ENCODE measurements at regions of chr19 and their contacts with region 1.

Region 1: DNA sequence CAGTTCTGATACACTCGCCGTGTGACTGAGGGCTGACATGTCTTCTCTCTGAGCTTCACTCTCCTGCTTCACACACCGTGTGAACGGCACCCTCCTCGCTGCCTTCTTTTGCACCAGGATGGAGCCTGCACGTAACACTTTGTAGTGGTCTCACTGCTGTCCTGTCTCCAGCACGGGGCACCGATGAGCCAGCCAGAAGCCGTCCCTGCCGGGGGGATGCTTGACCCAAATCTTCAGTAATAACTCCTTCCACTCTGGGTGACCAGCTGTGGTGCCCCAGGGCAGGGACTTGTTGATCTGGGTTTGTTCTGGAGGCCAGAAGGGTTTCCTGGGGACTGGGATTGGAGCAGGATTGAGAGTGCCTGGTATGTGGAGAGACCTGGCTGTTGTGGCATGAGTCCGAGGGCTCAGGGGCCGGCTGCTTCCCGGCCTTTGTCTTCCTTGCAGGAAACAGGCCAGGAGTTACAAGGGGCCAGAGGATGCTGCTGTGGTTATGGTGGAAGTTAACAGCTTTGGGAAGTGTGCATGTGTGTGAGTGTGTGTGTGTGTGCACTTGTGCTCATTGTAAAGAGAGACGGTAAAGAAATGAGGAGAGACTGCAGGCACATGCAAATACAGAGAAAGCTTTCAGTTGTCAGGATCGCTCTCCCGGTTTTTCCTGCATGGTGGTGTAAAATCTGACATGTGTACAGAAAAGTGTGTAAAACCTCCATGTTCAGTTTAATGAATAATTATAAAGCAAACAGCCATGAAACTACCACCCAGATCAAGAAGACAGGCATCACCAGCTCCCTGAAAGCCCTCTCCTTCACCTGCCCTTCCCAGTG is 18.9 kb downstream of the PAK4 start:
- DNase-seq: no peak
- ATAC-seq: peak; percentile 64
- H3K4me3 ChIP-seq: no peak overlapping the region
- H3K27ac ChIP-seq: peak overlapping the region; percentile 0; the same call in 1 of the 2 replicates
- H3K4me1 ChIP-seq: peaks cover 31% of the 10 kb centered on the region
- H3K27me3 ChIP-seq: no peaks in the 10 kb centered on the region
- CTCF ChIP-seq: no peak

Region 2: GRCh38 chr19:39038098-39038497 is 106.4 kb before region 1 on chr19:
- CTCF ChIA-PET with region 1: no interaction called
- POLR2A ChIA-PET with region 1: interaction called, 16 read pairs
- in situ Hi-C with region 1: no loop called
- intact Hi-C with region 1: no loop called
- DNase-seq: no peak
- ATAC-seq: peak; percentile 96
- H3K4me3 ChIP-seq: peak overlapping the region in 1 of 2 experiments; percentile 5; a peak in 2 of 4 replicates
- H3K27ac ChIP-seq: peak overlapping the region; percentile 3; the same call in 1 of the 2 replicates
- H3K4me1 ChIP-seq: peaks cover 11% of the 10 kb centered on the region
- H3K27me3 ChIP-seq: no peaks in the 10 kb centered on the region
- CTCF ChIP-seq: no peak